ENCODE measurements at regions of chr7 and their contacts with region 1.

Region 1: GRCh38 chr7:104883718-104884452 is 130.1 kb upstream of the KMT2E start:
- DNase-seq: peak; percentile 88
- ATAC-seq: peak; percentile 98
- H3K4me3 Mint-ChIP-seq: no peak overlapping the region
- H3K27ac Mint-ChIP-seq: no peak overlapping the region
- H3K4me1 Mint-ChIP-seq: peaks cover 8% of the 10 kb centered on the region
- H3K27me3 Mint-ChIP-seq: peaks cover 14% of the 10 kb centered on the region; the same call in 1 of the 2 replicates
- CTCF ChIP-seq: peak; percentile 91

Region 2: DNA sequence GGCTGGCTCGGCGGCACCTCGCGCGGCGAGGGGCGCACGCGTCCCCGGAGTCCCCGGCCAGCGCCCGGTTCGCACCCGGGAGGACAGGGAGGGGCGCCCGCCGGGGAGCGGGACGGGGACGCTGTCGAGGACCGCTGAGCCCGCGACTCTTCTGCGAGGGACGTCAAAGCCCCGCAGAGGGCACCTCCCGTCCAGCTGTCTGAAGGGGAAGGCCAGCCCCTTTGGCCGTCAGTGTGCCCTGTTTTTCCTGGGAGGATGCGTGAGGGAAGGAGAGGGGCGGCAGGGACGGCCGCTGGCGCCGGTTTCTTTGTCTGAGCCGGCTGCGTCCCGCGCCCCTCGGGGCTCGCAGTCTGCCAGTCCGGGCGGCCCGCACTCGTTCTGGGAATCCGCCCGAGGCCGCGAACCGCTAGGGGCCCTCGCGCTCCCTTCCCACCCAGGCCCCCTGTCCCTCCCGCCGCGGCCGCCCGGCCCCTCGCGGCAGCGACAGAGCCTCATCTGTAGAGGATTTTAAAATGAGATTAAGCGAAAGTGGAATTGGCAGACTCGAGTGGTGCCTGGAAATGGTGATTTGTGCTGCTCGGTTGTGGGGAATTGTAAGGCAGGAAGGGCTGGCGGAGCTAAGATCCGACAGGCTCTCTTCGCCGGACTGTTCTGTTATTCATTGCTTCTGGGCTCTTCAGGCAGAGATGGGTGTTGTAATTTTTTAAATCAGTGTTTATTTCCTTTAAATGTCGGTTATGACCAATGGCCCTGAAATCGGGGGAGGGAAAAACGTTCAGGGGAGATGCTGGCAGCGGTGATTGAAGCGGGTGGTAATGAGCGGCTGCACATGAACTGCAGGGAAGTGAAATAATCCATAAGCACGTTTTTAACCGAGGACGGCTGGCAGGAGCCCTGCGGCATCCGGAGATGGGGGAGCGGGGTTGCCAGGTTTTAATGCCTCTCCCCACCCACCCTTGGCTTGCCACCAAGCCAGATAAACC is 893.8 kb before region 1 on chr7:
- CTCF ChIA-PET with region 1: no interaction called
- POLR2A ChIA-PET with region 1: no interaction called
- DNase-seq: peak; percentile 51
- ATAC-seq: peak; percentile 66
- H3K4me3 Mint-ChIP-seq: peak overlapping the region; percentile 82
- H3K27ac Mint-ChIP-seq: no peak overlapping the region
- H3K4me1 Mint-ChIP-seq: peaks cover 9% of the 10 kb centered on the region
- H3K27me3 Mint-ChIP-seq: peaks cover 74% of the 10 kb centered on the region
- CTCF ChIP-seq: no peak

Region 3: DNA sequence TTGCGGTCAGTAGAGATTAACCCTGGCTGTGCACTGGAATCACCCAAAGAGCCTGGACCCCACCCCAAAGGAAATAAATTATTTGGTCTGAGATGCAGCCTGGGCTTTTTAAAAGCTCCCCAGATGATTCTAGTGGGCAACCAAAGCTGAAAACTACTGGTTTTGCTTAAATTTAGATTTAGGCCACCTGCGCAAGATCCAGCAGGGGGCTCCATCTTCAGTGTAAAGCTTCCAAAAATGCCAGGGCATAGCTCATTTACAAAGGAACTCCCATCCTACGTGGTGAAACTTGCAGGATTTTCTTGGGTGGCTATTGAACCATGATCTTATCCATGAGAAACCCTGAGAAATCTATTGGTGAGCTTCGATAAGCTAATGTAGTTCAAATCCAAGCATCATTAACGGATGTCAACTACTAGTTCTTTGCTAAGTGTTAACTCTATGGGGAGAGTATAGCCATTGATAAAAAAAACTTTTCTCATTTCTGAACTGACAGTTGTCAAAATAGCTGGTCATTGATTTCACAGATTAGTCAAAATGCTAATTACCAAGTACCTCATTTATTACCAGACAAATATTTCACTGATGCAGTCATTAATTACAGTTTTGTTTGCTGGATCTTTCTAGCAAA is 240.2 kb before region 1 on chr7:
- CTCF ChIA-PET with region 1: interaction called, 16 read pairs
- POLR2A ChIA-PET with region 1: no interaction called
- DNase-seq: peak; percentile 26
- ATAC-seq: peak; percentile 69
- H3K4me3 Mint-ChIP-seq: no peak overlapping the region
- H3K27ac Mint-ChIP-seq: no peak overlapping the region
- H3K4me1 Mint-ChIP-seq: peaks cover 5% of the 10 kb centered on the region; the same call in 1 of the 2 replicates
- H3K27me3 Mint-ChIP-seq: no peaks in the 10 kb centered on the region
- CTCF ChIP-seq: peak; percentile 46; the same call in 1 of the 2 replicates

Region 4: DNA sequence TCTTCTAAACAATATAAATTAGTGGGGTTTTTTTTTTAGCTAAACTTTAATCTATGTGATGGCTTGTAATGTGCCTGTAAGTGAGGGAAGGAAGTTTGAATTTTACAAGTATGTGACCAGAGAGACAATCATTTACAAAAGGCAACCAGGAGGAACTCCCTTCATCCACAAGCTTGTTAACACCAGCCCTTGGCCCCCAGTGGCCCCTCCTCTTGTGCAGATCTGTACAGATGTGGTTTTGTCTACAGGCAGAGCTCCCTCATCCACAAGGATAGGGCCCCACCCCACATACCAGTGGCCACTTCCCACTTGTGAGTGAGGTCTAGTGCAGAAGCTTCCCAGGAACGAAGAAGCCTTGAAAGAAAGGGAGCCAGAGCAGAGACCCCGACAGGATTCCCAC is 104.0 kb before region 1 on chr7:
- CTCF ChIA-PET with region 1: no interaction called
- POLR2A ChIA-PET with region 1: no interaction called
- DNase-seq: no peak
- ATAC-seq: no peak
- H3K4me3 Mint-ChIP-seq: no peak overlapping the region
- H3K27ac Mint-ChIP-seq: no peak overlapping the region
- H3K4me1 Mint-ChIP-seq: 0 out of 2 replicates have a peak, but pooled peaks cover 5% of the 10 kb centered on the region
- H3K27me3 Mint-ChIP-seq: no peaks in the 10 kb centered on the region
- CTCF ChIP-seq: no peak

Region 5: GRCh38 chr7:104862719-104863118 is 21.2 kb before region 1 on chr7:
- CTCF ChIA-PET with region 1: interaction called, 25 read pairs
- POLR2A ChIA-PET with region 1: no interaction called
- DNase-seq: peak; percentile 54
- ATAC-seq: peak; percentile 81; the same call in 1 of the 2 replicates
- H3K4me3 Mint-ChIP-seq: no peak overlapping the region
- H3K27ac Mint-ChIP-seq: no peak overlapping the region
- H3K4me1 Mint-ChIP-seq: no peaks in the 10 kb centered on the region
- H3K27me3 Mint-ChIP-seq: peaks cover 57% of the 10 kb centered on the region
- CTCF ChIP-seq: peak; percentile 62; the same call in 1 of the 2 replicates

Region 6: GRCh38 chr7:104895522-104896236 is 11.8 kb after region 1 on chr7:
- CTCF ChIA-PET with region 1: interaction called, 46 read pairs
- POLR2A ChIA-PET with region 1: no interaction called
- DNase-seq: no peak
- ATAC-seq: no peak
- H3K4me3 Mint-ChIP-seq: no peak overlapping the region
- H3K27ac Mint-ChIP-seq: no peak overlapping the region
- H3K4me1 Mint-ChIP-seq: peaks cover 2% of the 10 kb centered on the region
- H3K27me3 Mint-ChIP-seq: no peaks in the 10 kb centered on the region; the same call in 1 of the 2 replicates
- CTCF ChIP-seq: no peak

Region 7: GRCh38 chr7:104914421-104914820 is 30.5 kb after region 1 on chr7:
- CTCF ChIA-PET with region 1: interaction called, 97 read pairs
- POLR2A ChIA-PET with region 1: no interaction called
- DNase-seq: no peak
- ATAC-seq: no peak
- H3K4me3 Mint-ChIP-seq: no peak overlapping the region
- H3K27ac Mint-ChIP-seq: no peak overlapping the region
- H3K4me1 Mint-ChIP-seq: no peaks in the 10 kb centered on the region
- H3K27me3 Mint-ChIP-seq: no peaks in the 10 kb centered on the region
- CTCF ChIP-seq: no peak

Region 8: GRCh38 chr7:104983578-104984539 is 100.0 kb after region 1 on chr7:
- CTCF ChIA-PET with region 1: interaction called, 13 read pairs
- POLR2A ChIA-PET with region 1: no interaction called
- DNase-seq: peak; percentile 83
- ATAC-seq: peak; percentile 94
- H3K4me3 Mint-ChIP-seq: peak overlapping the region; percentile 98
- H3K27ac Mint-ChIP-seq: peak overlapping the region; percentile 100
- H3K4me1 Mint-ChIP-seq: peaks cover 74% of the 10 kb centered on the region
- H3K27me3 Mint-ChIP-seq: no peaks in the 10 kb centered on the region
- CTCF ChIP-seq: peak; percentile 11; the same call in 1 of the 2 replicates

Region 9: GRCh38 chr7:105782391-105783042 is 898.6 kb after region 1 on chr7:
- CTCF ChIA-PET with region 1: no interaction called
- POLR2A ChIA-PET with region 1: no interaction called
- DNase-seq: no peak
- ATAC-seq: no peak
- H3K4me3 Mint-ChIP-seq: no peak overlapping the region
- H3K27ac Mint-ChIP-seq: no peak overlapping the region
- H3K4me1 Mint-ChIP-seq: peaks cover 18% of the 10 kb centered on the region
- H3K27me3 Mint-ChIP-seq: no peaks in the 10 kb centered on the region
- CTCF ChIP-seq: no peak

Measured in WTC11 (cell line).